ENCODE measurements at regions of chr17 and their contacts with region 1.

Region 1: GRCh38 chr17:45428050-45428617 is 4.5 kb downstream of the ARHGAP27 start:
- DNase-seq: peak; percentile 86
- ATAC-seq: peak; percentile 15
- H3K4me3 Mint-ChIP-seq: peak overlapping the region; percentile 67
- H3K27ac Mint-ChIP-seq: no peak overlapping the region
- H3K4me1 Mint-ChIP-seq: peaks cover 36% of the 10 kb centered on the region
- H3K27me3 Mint-ChIP-seq: peaks cover 57% of the 10 kb centered on the region
- CTCF ChIP-seq: peak; percentile 99

Region 2: DNA sequence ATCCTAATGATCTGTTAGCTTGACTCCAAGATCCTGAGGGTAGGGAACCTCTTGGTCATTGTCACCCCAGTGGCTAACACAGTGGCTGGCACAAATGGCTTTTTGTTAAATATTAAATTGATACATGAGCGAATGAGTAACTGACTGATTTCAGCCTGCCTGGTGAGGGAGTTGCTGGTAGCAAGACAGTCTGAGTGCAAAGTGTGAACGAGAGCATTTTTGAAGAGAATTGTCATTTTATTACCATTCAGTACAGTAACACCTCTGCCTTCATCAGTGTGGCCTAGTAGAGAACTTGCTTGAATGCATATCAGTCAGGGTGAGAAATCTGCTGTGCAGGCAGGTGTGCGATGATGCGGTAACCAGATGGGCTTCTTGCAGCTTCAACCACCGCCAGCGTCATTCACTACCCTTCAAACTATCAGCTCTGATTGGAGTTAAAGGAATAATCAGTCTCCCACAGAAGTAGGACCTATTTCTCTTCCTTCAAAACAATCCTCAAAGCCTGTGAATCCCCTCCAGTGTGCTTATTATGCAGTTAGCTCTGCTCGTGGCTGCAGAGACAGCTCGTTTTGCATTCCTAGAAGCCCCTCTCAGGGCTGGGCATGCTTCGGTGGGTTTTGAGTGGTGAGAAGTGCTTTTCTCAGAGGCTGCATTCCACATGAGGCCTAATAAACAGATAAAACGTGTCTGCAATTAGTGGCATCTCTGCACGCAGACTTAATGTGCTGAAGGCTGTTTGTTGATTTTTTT is 237.5 kb before region 1 on chr17:
- CTCF ChIA-PET with region 1: no interaction called
- POLR2A ChIA-PET with region 1: no interaction called
- DNase-seq: no peak
- ATAC-seq: no peak
- H3K4me3 Mint-ChIP-seq: no peak overlapping the region
- H3K27ac Mint-ChIP-seq: no peak overlapping the region
- H3K4me1 Mint-ChIP-seq: no peaks in the 10 kb centered on the region
- H3K27me3 Mint-ChIP-seq: no peaks in the 10 kb centered on the region
- CTCF ChIP-seq: no peak

Region 3: GRCh38 chr17:45317112-45317928 is 110.8 kb before region 1 on chr17:
- CTCF ChIA-PET with region 1: interaction called, 14 read pairs
- POLR2A ChIA-PET with region 1: no interaction called
- DNase-seq: peak; percentile 100
- ATAC-seq: peak; percentile 92
- H3K4me3 Mint-ChIP-seq: peak overlapping the region; percentile 85
- H3K27ac Mint-ChIP-seq: peak overlapping the region; percentile 90
- H3K4me1 Mint-ChIP-seq: peaks cover 22% of the 10 kb centered on the region
- H3K27me3 Mint-ChIP-seq: peaks cover 37% of the 10 kb centered on the region
- CTCF ChIP-seq: no peak

Region 4: GRCh38 chr17:45341533-45342158 is 86.5 kb before region 1 on chr17:
- CTCF ChIA-PET with region 1: no interaction called
- POLR2A ChIA-PET with region 1: no interaction called
- DNase-seq: peak; percentile 89
- ATAC-seq: peak; percentile 99
- H3K4me3 Mint-ChIP-seq: no peak overlapping the region
- H3K27ac Mint-ChIP-seq: peak overlapping the region; percentile 92; the same call in 1 of the 2 replicates
- H3K4me1 Mint-ChIP-seq: peaks cover 13% of the 10 kb centered on the region
- H3K27me3 Mint-ChIP-seq: peaks cover 6% of the 10 kb centered on the region
- CTCF ChIP-seq: no peak

Region 5: GRCh38 chr17:45357364-45357997 is 70.7 kb before region 1 on chr17:
- CTCF ChIA-PET with region 1: no interaction called
- POLR2A ChIA-PET with region 1: no interaction called
- DNase-seq: no peak
- ATAC-seq: no peak
- H3K4me3 Mint-ChIP-seq: no peak overlapping the region
- H3K27ac Mint-ChIP-seq: no peak overlapping the region
- H3K4me1 Mint-ChIP-seq: no peaks in the 10 kb centered on the region
- H3K27me3 Mint-ChIP-seq: peaks cover 17% of the 10 kb centered on the region
- CTCF ChIP-seq: no peak

Region 6: GRCh38 chr17:45394913-45395568 is 33.1 kb before region 1 on chr17:
- CTCF ChIA-PET with region 1: interaction called, 133 read pairs
- POLR2A ChIA-PET with region 1: interaction called, 4 read pairs
- DNase-seq: peak; percentile 88
- ATAC-seq: peak; percentile 81
- H3K4me3 Mint-ChIP-seq: peak overlapping the region; percentile 34
- H3K27ac Mint-ChIP-seq: no peak overlapping the region
- H3K4me1 Mint-ChIP-seq: peaks cover 15% of the 10 kb centered on the region
- H3K27me3 Mint-ChIP-seq: peaks cover 3% of the 10 kb centered on the region; the same call in 1 of the 2 replicates
- CTCF ChIP-seq: peak; percentile 71

Region 7: GRCh38 chr17:45410144-45411091 is 17.7 kb before region 1 on chr17:
- CTCF ChIA-PET with region 1: interaction called, 38 read pairs
- POLR2A ChIA-PET with region 1: interaction called, 6 read pairs
- DNase-seq: no peak
- ATAC-seq: no peak
- H3K4me3 Mint-ChIP-seq: no peak overlapping the region
- H3K27ac Mint-ChIP-seq: 0 out of 2 replicates have a peak overlapping the region, but pooled peaks have one; percentile 57
- H3K4me1 Mint-ChIP-seq: peaks cover 38% of the 10 kb centered on the region
- H3K27me3 Mint-ChIP-seq: peaks cover 3% of the 10 kb centered on the region; the same call in 1 of the 2 replicates
- CTCF ChIP-seq: no peak

Measured in WTC11 (cell line).